ENCODE measurements at regions of chr12 and their contacts with region 1.

Region 1: DNA sequence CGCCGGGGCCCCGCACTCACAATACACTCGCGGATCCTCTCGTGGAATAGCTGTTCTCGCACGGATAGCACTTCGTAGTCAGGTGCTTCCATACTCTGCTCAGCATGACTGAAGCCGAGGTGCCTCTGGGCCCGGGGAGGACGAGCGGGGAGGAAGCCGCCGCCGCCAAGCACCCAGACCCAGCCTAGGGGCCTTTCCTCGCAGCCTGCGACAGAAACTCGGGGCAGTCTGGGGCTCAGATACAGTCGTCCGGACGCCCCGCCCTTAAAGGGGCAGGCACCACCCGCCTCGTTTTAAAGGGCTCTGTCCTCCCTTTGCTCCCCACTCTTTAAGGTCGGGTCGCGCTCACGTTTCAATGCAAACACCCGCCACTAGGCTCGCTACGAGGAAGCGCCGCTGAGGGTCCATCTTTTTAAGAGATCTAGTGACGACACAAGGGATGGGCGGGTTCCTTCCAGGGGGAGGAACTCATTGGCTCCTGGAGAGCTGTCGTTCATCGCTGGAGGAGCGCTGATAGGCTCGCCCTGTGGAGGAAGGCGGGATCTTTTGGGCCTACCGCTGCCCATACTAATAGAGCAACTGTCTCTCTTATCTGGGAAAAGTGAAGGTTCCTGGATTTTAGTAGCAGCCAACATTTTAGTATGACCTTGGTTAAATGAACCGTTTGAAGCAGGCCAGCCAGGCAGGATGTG is at the start of gene LMBR1L:
- DNase-seq: peak; percentile 97
- ATAC-seq: peak; percentile 96
- total RNA-seq, gene LMBR1L: 30.0 TPM

Region 2: GRCh38 chr12:49069507-49070346 is 40.9 kb before region 1 on chr12 and contains the start of gene RHEBL1:
- intact Hi-C with region 1: loop called (anchors 5 kb)
- DNase-seq: peak; percentile 99
- ATAC-seq: peak; percentile 100
- total RNA-seq, gene RHEBL1: 0.48 TPM

Region 3: DNA sequence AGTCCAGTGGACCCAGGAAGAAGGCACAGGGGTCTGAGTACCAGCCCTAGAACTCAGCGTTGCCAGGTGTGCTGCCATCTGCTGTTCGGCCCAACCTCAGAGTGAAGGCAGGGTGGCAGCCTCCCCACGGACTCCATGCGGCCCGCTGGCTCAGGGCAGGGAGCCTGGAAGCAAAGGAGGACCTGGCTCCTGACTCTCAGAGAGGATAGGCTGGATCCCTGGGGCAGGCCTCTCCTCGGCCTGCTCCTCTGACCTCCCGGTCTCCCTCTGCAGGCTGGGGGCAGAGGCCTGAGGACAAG is 447.3 kb after region 1 on chr12:
- intact Hi-C with region 1: no loop called
- DNase-seq: no peak
- ATAC-seq: peak; percentile 29